Left cardiac atrium (tissue), 4 donors: ENCODE measurements at regions of chr12 and their contacts with region 1.

Region 1: DNA sequence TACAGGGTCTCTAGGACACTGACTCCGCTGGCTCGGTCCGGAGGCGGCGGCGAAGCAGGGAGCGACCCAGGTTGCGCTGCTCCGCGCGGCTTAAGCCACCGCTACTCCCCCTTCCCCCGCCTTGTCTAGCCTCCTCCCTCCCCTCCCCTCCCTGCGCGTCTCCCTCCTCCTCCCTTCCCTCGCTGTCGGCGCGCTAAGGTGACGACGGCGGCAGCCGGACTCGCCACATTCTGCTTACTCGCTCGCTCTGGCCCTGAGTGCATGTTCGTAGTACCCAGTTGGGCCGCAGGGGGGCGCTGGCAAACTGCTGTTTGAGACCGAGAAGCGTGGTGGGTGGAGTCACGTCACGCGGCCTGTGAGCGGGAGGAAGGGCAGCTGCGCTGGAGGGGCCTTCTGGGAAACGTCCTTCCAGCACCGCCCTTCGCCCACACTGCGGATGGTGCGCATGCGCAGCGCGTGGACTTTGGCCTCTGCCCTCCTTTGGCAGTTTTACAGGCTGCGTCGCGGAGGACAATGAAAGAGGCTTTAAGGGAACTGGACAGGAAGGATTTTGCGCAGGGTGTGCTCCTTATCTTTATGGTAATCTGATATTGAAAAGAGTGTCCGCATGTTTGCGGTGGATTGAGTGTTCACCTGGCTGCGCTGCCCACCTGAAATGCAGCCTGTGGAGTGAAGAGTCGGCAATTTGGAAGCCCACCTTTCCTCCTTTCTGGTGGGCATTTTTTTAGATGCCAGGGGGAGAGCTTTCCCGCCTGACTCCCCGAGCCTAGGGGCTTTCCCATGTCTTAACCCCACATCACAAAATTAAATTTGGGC is at the start of gene SCAF11:
- DNase-seq: peak; percentile 100
- ATAC-seq: peak; percentile 94 to 95
- total RNA-seq, gene SCAF11: 74.7 to 89.2 TPM

Region 2: GRCh38 chr12:45728630-45729232 is 261.9 kb before region 1 on chr12:
- intact Hi-C with region 1: loop called in 1 of 2 experiments (anchors 5 kb)
- DNase-seq: peak; percentile 97
- ATAC-seq: peak; percentile 80 to 83